Activated CD4-positive, alpha-beta memory T cell treated with anti-CD3 and anti-CD28 coated beads for 36 hours (primary cell): ENCODE measurements at regions of chr6 and their contacts with region 1.

Region 1: GRCh38 chr6:137873273-137873762 is 6.3 kb downstream of the TNFAIP3 start:
- DNase-seq: peak; percentile 92
- H3K4me3 Mint-ChIP-seq: peak overlapping the region; percentile 91
- H3K27ac Mint-ChIP-seq: peak overlapping the region; percentile 93
- H3K4me1 Mint-ChIP-seq: peaks cover 46% of the 10 kb centered on the region
- H3K27me3 Mint-ChIP-seq: no peaks in the 10 kb centered on the region

Region 2: DNA sequence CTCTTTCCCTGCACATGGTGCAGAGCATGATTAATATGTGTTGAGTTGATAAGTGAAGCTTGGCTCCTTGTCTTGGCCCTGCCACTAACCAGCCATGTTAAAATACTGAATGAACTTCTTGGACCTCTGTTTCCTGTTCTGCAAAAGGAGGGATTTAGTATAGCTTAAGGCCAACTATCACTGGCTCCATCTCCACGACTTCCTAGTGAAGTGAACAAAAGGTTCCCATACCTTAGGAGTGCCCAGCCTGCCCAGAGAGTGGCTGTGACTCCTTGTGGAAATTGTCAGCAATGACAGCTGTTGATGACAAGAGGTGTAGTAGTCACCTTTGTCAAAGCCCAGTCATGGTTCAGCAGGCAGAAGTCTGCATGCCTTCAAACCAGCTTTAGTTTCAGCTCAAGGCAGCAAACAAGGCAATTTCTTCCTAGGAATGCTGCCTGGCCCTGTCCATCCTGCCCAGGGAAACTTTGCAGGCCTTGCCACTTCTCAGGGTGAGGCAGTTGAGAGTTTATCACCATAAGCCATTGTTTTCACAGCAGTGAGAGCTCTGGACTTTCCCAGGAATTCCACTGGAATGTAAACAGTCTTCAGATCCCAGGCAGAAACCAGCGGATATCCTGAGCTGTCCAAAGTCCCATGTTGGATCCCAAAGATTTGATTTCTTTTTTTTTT is 175.9 kb before region 1 on chr6:
- CTCF ChIA-PET with region 1: interaction called, 20 read pairs
- POLR2A ChIA-PET with region 1: interaction called, 49 read pairs
- intact Hi-C with region 1: no loop called
- DNase-seq: peak; percentile 52
- H3K4me3 Mint-ChIP-seq: no peak overlapping the region
- H3K27ac Mint-ChIP-seq: peak overlapping the region; percentile 43
- H3K4me1 Mint-ChIP-seq: peaks cover 57% of the 10 kb centered on the region
- H3K27me3 Mint-ChIP-seq: peaks cover 1% of the 10 kb centered on the region

Region 3: GRCh38 chr6:137767911-137768690 is 105.2 kb before region 1 on chr6:
- CTCF ChIA-PET with region 1: no interaction called
- POLR2A ChIA-PET with region 1: no interaction called
- intact Hi-C with region 1: no loop called
- DNase-seq: no peak
- H3K4me3 Mint-ChIP-seq: no peak overlapping the region
- H3K27ac Mint-ChIP-seq: peak overlapping the region; percentile 61
- H3K4me1 Mint-ChIP-seq: peaks cover 22% of the 10 kb centered on the region
- H3K27me3 Mint-ChIP-seq: no peaks in the 10 kb centered on the region

Region 4: GRCh38 chr6:137811121-137811915 is 62.0 kb before region 1 on chr6:
- CTCF ChIA-PET with region 1: interaction called, 61 read pairs
- POLR2A ChIA-PET with region 1: interaction called, 11 read pairs
- intact Hi-C with region 1: no loop called
- DNase-seq: peak; percentile 90
- H3K4me3 Mint-ChIP-seq: peak overlapping the region; percentile 36
- H3K27ac Mint-ChIP-seq: peak overlapping the region; percentile 91
- H3K4me1 Mint-ChIP-seq: peaks cover 66% of the 10 kb centered on the region
- H3K27me3 Mint-ChIP-seq: no peaks in the 10 kb centered on the region

Region 5: GRCh38 chr6:137839076-137839475 is 34.2 kb before region 1 on chr6:
- CTCF ChIA-PET with region 1: no interaction called
- POLR2A ChIA-PET with region 1: no interaction called
- intact Hi-C with region 1: no loop called
- DNase-seq: no peak
- H3K4me3 Mint-ChIP-seq: no peak overlapping the region
- H3K27ac Mint-ChIP-seq: no peak overlapping the region
- H3K4me1 Mint-ChIP-seq: peaks cover 11% of the 10 kb centered on the region
- H3K27me3 Mint-ChIP-seq: no peaks in the 10 kb centered on the region

Region 6: GRCh38 chr6:137849181-137849980 is 23.9 kb before region 1 on chr6:
- CTCF ChIA-PET with region 1: interaction called, 4 read pairs
- POLR2A ChIA-PET with region 1: interaction called, 13 read pairs
- intact Hi-C with region 1: no loop called
- DNase-seq: peak; percentile 78
- H3K4me3 Mint-ChIP-seq: no peak overlapping the region
- H3K27ac Mint-ChIP-seq: peak overlapping the region; percentile 79
- H3K4me1 Mint-ChIP-seq: peaks cover 35% of the 10 kb centered on the region
- H3K27me3 Mint-ChIP-seq: no peaks in the 10 kb centered on the region

Region 7: GRCh38 chr6:137927777-137928218 is 54.5 kb after region 1 on chr6:
- CTCF ChIA-PET with region 1: interaction called, 17 read pairs
- POLR2A ChIA-PET with region 1: interaction called, 27 read pairs
- intact Hi-C with region 1: loop called (anchors 1 kb)
- DNase-seq: peak; percentile 88
- H3K4me3 Mint-ChIP-seq: peak overlapping the region; percentile 65
- H3K27ac Mint-ChIP-seq: peak overlapping the region; percentile 90
- H3K4me1 Mint-ChIP-seq: peaks cover 46% of the 10 kb centered on the region
- H3K27me3 Mint-ChIP-seq: no peaks in the 10 kb centered on the region

Region 8: DNA sequence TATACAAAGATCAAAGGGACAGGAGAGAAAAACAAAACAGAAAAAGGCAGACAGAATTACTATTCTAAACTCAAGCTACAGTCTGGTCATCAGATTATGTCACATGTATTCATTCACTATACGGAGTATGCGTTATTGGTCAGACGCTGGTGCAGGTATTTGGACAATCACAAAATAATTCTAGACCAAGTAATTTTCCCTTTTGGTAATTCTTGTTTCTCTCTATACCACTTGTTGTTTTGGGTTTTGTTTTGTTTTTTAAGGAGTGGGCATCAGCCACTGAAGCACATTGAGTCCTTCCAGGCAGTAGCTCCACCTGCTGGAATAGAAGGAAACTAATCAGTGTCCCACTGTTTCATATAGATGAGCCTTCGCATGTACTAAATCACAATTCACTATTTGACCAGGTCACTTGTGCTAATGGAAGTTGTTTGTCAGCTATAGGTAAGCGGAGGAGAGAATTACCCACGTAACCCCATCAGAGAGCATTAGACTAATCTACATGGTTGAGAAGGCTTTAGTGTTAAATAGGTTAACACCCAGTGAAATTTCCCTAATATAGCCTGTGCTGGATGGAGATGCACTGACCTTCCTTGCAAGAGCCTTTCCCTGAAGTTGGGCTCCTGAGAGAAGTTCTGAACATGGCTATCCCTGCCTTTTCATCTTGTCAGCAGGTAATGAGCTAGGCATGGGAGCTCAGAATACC is 71.6 kb after region 1 on chr6:
- CTCF ChIA-PET with region 1: interaction called, 270 read pairs
- POLR2A ChIA-PET with region 1: interaction called, 33 read pairs
- intact Hi-C with region 1: loop called (anchors 1 kb)
- DNase-seq: peak; percentile 24
- H3K4me3 Mint-ChIP-seq: no peak overlapping the region
- H3K27ac Mint-ChIP-seq: peak overlapping the region; percentile 47
- H3K4me1 Mint-ChIP-seq: peaks cover 40% of the 10 kb centered on the region
- H3K27me3 Mint-ChIP-seq: no peaks in the 10 kb centered on the region

Region 9: GRCh38 chr6:138001750-138002349 is 128.5 kb after region 1 on chr6:
- CTCF ChIA-PET with region 1: interaction called, 53 read pairs
- POLR2A ChIA-PET with region 1: no interaction called
- intact Hi-C with region 1: no loop called
- DNase-seq: peak; percentile 76
- H3K4me3 Mint-ChIP-seq: no peak overlapping the region
- H3K27ac Mint-ChIP-seq: no peak overlapping the region
- H3K4me1 Mint-ChIP-seq: peaks cover 14% of the 10 kb centered on the region
- H3K27me3 Mint-ChIP-seq: peaks cover 3% of the 10 kb centered on the region